BJ (cell line): ENCODE measurements at regions of chr16 and their contacts with region 1.

Region 1: DNA sequence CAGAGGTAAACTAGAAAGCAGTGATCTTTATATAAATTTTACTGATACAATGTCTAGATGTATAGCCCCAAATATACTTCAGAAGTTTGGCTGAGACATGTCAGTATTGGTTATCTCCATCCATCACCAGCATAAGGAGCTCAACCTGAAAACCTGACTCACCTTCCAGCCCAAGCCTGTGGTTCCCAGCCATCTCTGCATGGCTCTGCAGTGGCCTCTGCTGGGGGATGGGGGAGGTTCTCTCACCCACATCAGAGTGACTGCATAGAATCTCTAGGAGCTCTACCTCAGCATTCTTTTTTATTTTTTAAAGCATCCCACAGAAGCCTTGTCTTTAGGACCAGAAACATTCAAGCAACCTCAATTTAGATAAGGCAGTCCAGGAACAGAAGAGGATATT is 27.3 kb downstream of the USP7 start:
- DNase-seq: no peak
- H3K4me3 ChIP-seq: no peak overlapping the region
- H3K27me3 ChIP-seq: no peaks in the 10 kb centered on the region
- CTCF ChIP-seq: peak; percentile 66

Region 2: DNA sequence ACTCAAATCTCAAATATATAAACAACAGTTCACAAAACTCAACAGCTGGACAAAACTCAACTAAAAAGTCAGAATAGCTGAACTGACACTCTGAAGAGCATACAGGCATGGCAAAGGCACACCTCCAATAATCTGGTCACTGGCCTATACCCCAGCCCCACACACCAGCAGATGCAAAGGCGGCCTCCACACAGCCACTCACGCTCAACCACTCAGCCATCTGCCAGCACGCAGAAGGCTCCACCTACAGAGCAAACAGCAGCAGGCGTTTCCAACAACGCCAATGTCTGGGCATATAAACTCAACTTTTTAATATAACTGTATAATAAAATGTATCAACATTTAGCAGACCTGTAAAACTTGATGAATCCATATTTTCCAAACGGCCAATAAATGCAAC is 10.1 kb after region 1 on chr16:
- CTCF ChIA-PET with region 1: interaction called, 11 read pairs
- POLR2A ChIA-PET with region 1: no interaction called
- DNase-seq: no peak
- H3K4me3 ChIP-seq: no peak overlapping the region
- H3K27me3 ChIP-seq: no peaks in the 10 kb centered on the region
- CTCF ChIP-seq: no peak